ENCODE measurements at regions of chr12 and their contacts with region 1.

Region 1: GRCh38 chr12:7859552-7859951 is 13.2 kb downstream of the SLC2A14 start:
- DNase-seq: no peak
- CTCF ChIP-seq: no peak

Region 2: DNA sequence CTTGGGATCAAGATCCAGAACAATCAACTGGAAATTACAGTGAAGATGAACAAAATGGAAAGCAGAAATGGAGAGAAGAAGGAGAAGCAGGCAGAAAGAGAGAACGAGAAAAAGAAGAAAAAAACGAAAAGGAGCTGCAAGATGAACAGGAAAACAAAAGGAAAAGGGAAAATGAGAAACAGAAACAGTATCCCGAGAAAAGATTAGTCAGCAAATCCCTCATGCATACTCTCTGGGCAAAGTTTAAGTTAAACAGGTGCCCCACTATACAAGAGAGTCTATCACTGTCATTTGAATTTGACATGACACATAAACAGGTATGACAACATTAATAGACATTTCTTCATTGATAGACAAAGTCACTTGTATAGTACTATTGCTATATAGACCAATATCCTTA is 89.6 kb before region 1 on chr12:
- CTCF ChIA-PET with region 1: no interaction called
- POLR2A ChIA-PET with region 1: no interaction called
- DNase-seq: no peak
- CTCF ChIP-seq: no peak

Region 3: DNA sequence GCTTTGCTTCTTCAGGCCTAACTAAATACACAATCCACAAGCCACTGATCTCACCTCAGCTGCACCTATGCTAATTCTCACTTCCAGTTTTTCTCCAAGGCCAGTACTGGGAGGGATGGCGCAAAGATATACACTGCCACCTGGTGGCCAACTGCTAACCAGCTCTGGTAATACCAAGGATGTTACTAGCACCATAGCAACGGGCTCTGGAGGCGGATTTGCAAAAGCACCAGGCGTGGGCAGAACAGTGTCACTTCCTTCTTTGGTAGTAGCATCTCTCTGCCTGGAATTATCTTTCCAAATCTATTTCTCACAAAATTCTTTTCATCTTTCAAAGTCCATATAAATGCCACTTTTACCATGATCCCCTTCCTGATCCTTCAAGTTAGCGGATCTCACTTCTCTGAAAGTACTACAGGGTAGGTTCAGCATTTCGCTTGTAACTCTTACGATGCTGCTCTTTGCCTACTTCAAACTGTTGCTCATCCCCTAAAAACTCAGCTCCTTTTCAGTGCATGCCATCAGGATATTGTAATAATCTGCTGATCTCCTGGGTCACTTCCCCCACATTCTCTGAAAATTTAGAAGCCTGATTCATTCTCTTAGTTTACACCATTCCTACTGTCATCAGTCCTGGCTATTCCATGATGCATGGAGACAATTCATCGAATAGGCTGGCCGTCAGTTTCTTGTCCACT is 135.9 kb after region 1 on chr12:
- CTCF ChIA-PET with region 1: interaction called, 61 read pairs
- POLR2A ChIA-PET with region 1: no interaction called
- DNase-seq: peak; percentile 66
- CTCF ChIP-seq: peak; percentile 66